ENCODE measurements at regions of chr1 and their contacts with region 1.

Region 1: DNA sequence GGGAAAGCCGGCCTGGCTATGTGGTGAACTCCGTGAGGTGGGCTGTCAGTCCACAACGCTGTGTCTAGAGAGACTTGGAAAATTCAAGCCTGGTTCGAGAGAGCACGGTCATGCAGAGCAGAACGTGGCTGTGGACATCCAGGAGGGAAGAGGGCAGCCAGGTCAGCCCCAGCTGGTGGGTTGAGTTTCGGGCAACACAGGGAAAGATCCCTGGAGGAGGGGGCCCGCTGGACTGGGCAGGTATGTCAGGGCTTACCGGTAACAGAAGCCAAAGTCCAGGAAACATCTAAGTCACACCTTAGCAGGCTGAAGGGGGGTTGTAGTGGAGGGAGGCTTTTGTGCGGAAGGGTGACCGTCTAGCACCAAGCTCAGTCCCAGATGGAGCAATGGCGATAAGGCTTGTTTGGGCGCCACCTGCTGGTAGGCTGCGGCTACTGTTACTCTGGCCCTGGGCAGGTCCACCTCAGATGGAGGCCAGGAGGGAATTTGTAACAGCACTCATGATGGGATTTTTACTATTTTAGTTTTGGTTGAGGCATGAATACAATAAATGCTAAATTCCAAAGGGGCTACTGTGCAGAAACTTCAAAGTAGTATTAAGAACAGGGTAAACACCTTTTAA is 143.3 kb upstream of the ZNF644 start:
- DNase-seq: peak; percentile 87
- ATAC-seq: peak; percentile 93
- H3K4me3 Mint-ChIP-seq: no peak overlapping the region
- H3K27ac Mint-ChIP-seq: no peak overlapping the region
- H3K4me1 Mint-ChIP-seq: no peaks in the 10 kb centered on the region
- H3K27me3 Mint-ChIP-seq: peaks cover 2% of the 10 kb centered on the region

Region 2: GRCh38 chr1:89833183-89834082 is 1331.7 kb before region 1 on chr1:
- CTCF ChIA-PET with region 1: no interaction called
- POLR2A ChIA-PET with region 1: no interaction called
- intact Hi-C with region 1: no loop called
- DNase-seq: no peak
- ATAC-seq: no peak
- H3K4me3 Mint-ChIP-seq: no peak overlapping the region
- H3K27ac Mint-ChIP-seq: no peak overlapping the region
- H3K4me1 Mint-ChIP-seq: peaks cover 5% of the 10 kb centered on the region
- H3K27me3 Mint-ChIP-seq: no peaks in the 10 kb centered on the region

Region 3: GRCh38 chr1:90045853-90046563 is 1119.1 kb before region 1 on chr1:
- CTCF ChIA-PET with region 1: interaction called, 3 read pairs
- POLR2A ChIA-PET with region 1: no interaction called
- intact Hi-C with region 1: loop called in 1 of 2 experiments (anchors 10 kb)
- DNase-seq: peak; percentile 46
- ATAC-seq: no peak
- H3K4me3 Mint-ChIP-seq: no peak overlapping the region
- H3K27ac Mint-ChIP-seq: no peak overlapping the region
- H3K4me1 Mint-ChIP-seq: no peaks in the 10 kb centered on the region
- H3K27me3 Mint-ChIP-seq: peaks cover 3% of the 10 kb centered on the region

Region 4: DNA sequence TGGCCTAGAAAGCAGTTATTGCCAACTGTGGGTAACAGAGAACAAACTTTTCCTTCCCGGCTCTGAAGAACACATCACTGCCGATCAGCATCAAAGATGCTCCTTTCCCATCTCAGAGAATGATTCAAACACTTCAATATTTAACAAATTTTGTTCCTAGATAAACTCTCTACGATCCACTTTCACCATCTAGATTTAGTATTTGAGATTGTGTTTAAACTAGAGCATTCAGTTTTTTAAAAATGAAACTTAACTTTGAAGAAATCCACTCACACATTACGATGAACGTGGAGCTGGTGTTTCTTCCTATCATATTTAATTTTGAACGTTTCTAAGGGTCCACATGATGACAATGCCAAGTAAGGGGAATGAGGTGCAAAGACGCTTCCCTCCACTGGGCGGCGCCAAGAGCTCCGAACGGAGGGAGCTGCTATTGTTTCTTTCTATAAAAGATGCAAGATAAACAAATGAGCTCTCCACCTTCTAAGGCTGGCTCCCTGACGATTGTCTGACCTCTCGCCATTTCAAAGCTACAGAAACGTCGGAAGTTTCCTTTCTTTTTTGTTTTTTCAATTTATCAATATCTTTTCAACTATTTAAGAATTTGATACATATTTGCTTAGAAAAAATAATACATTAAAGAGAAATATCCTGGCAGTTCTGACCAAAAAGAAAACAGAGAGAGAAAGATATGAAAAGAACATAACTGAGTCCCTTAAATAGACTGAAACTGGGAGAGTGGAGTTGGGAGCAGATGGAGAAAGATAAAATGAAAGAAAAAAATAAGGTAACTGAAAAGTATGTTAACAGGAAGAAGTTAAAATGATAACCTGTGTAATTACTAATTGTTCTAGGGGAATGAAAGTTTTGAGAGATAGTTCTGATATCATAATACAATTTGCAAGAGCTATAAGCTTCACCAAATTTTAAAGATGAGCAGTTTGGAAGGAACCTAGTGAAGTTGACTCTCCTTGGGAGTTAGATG is 443.6 kb before region 1 on chr1:
- CTCF ChIA-PET with region 1: interaction called, 12 read pairs
- POLR2A ChIA-PET with region 1: no interaction called
- intact Hi-C with region 1: loop called (anchors 1 to 5 kb)
- DNase-seq: peak; percentile 78
- ATAC-seq: peak; percentile 47
- H3K4me3 Mint-ChIP-seq: no peak overlapping the region
- H3K27ac Mint-ChIP-seq: no peak overlapping the region
- H3K4me1 Mint-ChIP-seq: peaks cover 56% of the 10 kb centered on the region
- H3K27me3 Mint-ChIP-seq: peaks cover 81% of the 10 kb centered on the region

Region 5: GRCh38 chr1:90964444-90965035 is 200.6 kb before region 1 on chr1:
- CTCF ChIA-PET with region 1: interaction called, 4 read pairs
- POLR2A ChIA-PET with region 1: no interaction called
- intact Hi-C with region 1: loop called in 1 of 2 experiments (anchors 10 kb)
- DNase-seq: no peak
- ATAC-seq: no peak
- H3K4me3 Mint-ChIP-seq: no peak overlapping the region
- H3K27ac Mint-ChIP-seq: no peak overlapping the region
- H3K4me1 Mint-ChIP-seq: peaks cover 38% of the 10 kb centered on the region
- H3K27me3 Mint-ChIP-seq: no peaks in the 10 kb centered on the region

Region 6: GRCh38 chr1:91201176-91201575 is 36.0 kb after region 1 on chr1:
- CTCF ChIA-PET with region 1: interaction called, 12 read pairs
- POLR2A ChIA-PET with region 1: no interaction called
- intact Hi-C with region 1: no loop called
- DNase-seq: no peak
- ATAC-seq: no peak
- H3K4me3 Mint-ChIP-seq: no peak overlapping the region
- H3K27ac Mint-ChIP-seq: no peak overlapping the region
- H3K4me1 Mint-ChIP-seq: no peaks in the 10 kb centered on the region
- H3K27me3 Mint-ChIP-seq: peaks cover 5% of the 10 kb centered on the region

Region 7: DNA sequence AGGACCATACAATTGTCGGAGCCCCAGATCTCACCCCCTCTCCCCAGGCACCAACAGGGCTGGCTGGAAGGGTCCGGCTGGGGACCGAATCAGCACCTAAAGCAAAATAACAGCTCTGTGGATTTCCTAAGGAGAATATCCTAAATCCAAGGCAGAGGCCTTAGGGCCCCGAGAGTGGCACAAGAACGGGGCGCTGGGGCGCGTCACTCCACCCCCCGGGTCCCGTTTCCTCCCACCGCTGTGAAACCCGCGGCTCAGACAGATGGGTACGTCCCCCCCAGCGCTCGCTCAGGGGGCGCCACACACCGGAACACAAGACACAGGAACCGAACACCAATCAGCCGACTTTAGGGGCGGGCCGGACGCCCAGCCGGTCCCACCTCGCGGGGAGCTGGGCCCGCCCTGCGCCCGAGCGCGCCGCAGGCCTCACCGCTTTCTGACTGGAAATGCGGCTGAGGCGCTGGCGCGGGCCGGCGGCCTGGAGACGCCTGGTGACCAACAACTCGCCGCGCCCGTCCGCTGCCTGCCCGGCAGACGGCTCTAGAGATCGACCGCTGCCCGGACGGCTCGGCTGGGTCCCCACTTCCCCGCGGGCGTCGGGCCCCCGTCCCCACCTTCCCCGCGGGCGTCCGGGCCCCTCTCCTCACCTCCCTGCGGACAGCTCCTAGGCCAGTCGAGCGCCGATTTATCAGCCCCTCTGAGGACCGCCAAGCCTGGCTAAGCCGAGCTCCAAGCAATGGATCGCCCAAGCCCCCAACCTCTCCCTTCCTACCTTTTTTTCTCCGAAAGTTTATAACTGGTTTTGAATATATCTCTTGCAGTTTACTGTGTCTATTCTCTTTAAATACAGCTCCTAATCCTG is 239.2 kb after region 1 on chr1 and contains the start of gene HFM1:
- CTCF ChIA-PET with region 1: no interaction called
- POLR2A ChIA-PET with region 1: no interaction called
- intact Hi-C with region 1: loop called (anchors 2 to 10 kb)
- DNase-seq: peak; percentile 67
- ATAC-seq: peak; percentile 96
- H3K4me3 Mint-ChIP-seq: peak within 1 kb of the TSS; percentile 67
- H3K27ac Mint-ChIP-seq: peak within 1 kb of the TSS; percentile 60
- H3K4me1 Mint-ChIP-seq: peaks cover 7% of the 10 kb centered on the region
- H3K27me3 Mint-ChIP-seq: peaks cover 44% of the 10 kb centered on the region
- total RNA-seq, gene HFM1: not detected

Measured in activated CD4-positive, alpha-beta T cell treated with anti-CD3 and anti-CD28 coated beads for 36 hours (primary cell).